ENCODE measurements at regions of chr2 and their contacts with region 1.

Region 1: DNA sequence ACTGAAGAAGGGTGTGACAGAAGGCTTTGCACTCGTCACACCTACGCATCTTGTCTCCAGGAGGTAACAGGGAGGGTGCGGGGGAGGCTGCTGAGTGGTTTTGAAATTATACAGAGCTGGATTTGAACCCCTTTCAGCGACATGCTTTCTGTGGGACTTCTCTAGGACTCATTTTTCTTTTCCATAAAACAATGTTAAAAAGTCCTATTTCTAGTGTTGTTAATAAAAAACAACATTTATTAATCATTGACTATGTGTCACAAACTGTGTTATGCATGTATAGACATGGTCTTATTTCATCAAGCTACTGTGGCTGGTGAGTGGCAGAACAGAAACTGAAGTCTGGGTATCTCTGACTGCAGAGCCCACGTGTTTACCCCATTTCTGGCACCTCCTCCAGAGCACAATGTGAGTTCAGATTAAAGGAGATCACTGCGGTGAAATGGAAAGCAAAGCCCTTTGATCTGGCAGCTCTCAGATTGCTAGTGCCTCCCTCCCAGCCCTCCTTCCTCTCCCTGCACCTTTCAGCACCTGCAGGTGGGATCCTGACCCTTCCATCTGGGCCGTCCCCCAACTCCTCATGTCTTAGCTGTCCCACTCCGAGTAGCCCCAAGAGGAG is 315.5 kb upstream of the MYT1L start:
- DNase-seq: peak; percentile 78
- ATAC-seq: peak; percentile 95
- H3K4me3 Mint-ChIP-seq: peak overlapping the region; percentile 49
- H3K27ac Mint-ChIP-seq: peak overlapping the region; percentile 78
- H3K4me1 Mint-ChIP-seq: peaks cover 38% of the 10 kb centered on the region
- H3K27me3 Mint-ChIP-seq: no peaks in the 10 kb centered on the region

Region 2: GRCh38 chr2:1823187-1824169 is 823.1 kb before region 1 on chr2:
- CTCF ChIA-PET with region 1: no interaction called
- POLR2A ChIA-PET with region 1: no interaction called
- intact Hi-C with region 1: no loop called
- DNase-seq: no peak
- ATAC-seq: no peak
- H3K4me3 Mint-ChIP-seq: no peak overlapping the region
- H3K27ac Mint-ChIP-seq: no peak overlapping the region
- H3K4me1 Mint-ChIP-seq: no peaks in the 10 kb centered on the region
- H3K27me3 Mint-ChIP-seq: peaks cover 2% of the 10 kb centered on the region

Region 3: GRCh38 chr2:2681711-2682251 is 35.2 kb after region 1 on chr2:
- CTCF ChIA-PET with region 1: no interaction called
- POLR2A ChIA-PET with region 1: no interaction called
- intact Hi-C with region 1: loop called in 1 of 2 experiments (anchors 2 kb)
- DNase-seq: peak; percentile 46
- ATAC-seq: peak; percentile 75
- H3K4me3 Mint-ChIP-seq: no peak overlapping the region
- H3K27ac Mint-ChIP-seq: peak overlapping the region; percentile 61
- H3K4me1 Mint-ChIP-seq: peaks cover 46% of the 10 kb centered on the region
- H3K27me3 Mint-ChIP-seq: no peaks in the 10 kb centered on the region